Right ventricle myocardium inferior (tissue), 1 donor: ENCODE measurements at regions of chr12 and their contacts with region 1.

Region 1: GRCh38 chr12:89451841-89452251 is 72.8 kb downstream of the GALNT4 start:
- DNase-seq: peak; percentile 74
- ATAC-seq: peak; percentile 76

Region 2: DNA sequence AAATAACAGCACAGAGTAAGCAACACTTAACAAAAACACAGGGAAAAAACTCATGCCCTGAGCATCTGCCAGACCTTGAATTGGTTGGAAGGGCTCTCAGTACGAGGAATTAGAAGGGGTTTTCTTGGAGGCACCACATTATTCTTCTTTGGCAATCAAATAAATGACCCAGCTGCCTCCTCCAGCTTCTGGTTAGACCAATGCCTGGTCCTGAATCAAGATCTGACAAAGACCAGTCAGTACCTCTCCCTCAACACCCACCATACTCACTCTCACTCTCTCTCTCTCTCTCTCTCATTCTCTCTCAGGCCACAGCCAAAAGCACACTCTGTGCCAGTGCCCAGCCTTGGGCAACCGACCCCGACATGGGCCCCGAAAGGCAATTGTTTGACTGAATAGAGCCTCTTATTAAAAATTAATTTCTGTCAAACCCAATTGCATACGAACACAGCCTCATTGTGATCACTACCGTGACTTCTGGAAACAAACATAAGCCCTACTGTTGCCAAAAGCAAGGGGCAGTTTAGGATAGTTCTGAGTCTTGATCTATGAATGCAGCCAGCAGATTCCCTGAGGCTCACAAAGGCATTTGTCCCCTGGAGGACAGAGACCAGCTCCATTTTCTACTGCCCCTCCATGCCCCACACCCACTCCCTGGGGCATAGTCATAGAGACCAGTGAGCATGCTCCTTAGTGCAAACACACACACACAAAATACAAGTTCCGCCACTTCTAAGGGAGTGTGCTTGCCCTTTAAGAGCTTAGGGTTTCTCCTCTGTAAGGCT is 123.4 kb before region 1 on chr12:
- intact Hi-C with region 1: no loop called
- DNase-seq: no peak
- ATAC-seq: no peak

Region 3: GRCh38 chr12:89389755-89390661 is 61.8 kb before region 1 on chr12:
- intact Hi-C with region 1: loop called (anchors 5 kb)
- DNase-seq: no peak
- ATAC-seq: peak; percentile 76